Right lobe of liver (tissue), 6 donors: ENCODE measurements at regions of chr1 and their contacts with region 1.

Region 1: DNA sequence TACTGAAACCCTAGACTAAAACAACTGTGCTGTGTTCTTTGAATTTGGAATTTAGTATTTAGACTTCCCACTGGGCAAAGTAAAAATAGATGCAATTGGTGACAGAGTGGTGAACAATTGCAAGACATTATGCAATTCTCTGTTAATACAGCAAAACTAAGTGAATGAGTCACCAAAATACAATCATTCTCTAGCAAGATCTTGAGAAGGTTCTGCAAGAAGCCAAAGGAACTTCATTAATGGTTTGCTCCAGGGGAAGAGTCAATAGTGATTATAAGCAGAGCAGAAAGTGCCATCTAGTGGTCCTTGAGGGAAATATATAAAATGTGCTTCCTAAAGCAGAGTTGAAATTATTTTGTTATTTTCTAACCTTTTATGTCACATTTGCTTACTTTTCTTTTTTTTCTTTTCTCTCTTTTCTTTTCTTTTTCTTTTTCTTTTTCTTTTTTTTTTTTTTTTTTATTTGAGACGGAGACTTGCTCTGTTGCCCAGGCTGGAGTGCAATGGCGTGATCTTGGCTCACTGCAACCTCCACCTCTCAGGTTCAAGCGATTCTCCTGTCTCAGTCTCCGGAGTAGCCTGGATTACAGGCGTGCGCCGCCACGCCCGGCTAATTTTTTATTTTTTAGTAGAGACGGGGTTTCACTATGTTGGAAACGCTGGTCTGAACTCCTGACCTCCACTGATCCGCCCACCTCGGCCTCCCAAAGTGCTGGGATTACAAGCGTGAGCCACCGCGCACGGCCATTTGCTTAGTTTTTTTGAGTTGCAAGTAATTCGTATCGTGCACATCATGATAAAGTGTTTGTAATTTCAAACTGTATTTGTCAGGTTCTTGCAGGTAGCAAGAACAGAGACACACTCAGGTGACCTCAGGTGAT is 99.2 kb downstream of the CTH start:
- DNase-seq: no peak
- ATAC-seq: peak; percentile 77 to 90 (median 82)
- H3K4me3 ChIP-seq: no peak overlapping the region
- H3K27ac ChIP-seq: no peak overlapping the region
- H3K4me1 ChIP-seq: no peaks in the 10 kb centered on the region
- H3K27me3 ChIP-seq: no peaks in the 10 kb centered on the region
- CTCF ChIP-seq: peak; percentile 66 to 74 (median 68)
- POLR2A ChIP-seq: no peak

Region 2: GRCh38 chr1:70134148-70134547 is 376.1 kb before region 1 on chr1:
- intact Hi-C with region 1: loop called in 1 of 2 experiments (anchors 10 kb)
- DNase-seq: no peak
- ATAC-seq: no peak
- H3K4me3 ChIP-seq: no peak overlapping the region
- H3K27ac ChIP-seq: no peak overlapping the region
- H3K4me1 ChIP-seq: peaks cover 0 to 9% (median 0%) of the 10 kb centered on the region in 4 donors
- H3K27me3 ChIP-seq: no peaks in the 10 kb centered on the region
- CTCF ChIP-seq: no peak
- POLR2A ChIP-seq: no peak

Region 3: GRCh38 chr1:70779571-70779970 is 269.3 kb after region 1 on chr1:
- intact Hi-C with region 1: no loop called
- DNase-seq: no peak
- ATAC-seq: no peak
- H3K4me3 ChIP-seq: no peak overlapping the region
- H3K27ac ChIP-seq: no peak overlapping the region
- H3K4me1 ChIP-seq: no peaks in the 10 kb centered on the region
- H3K27me3 ChIP-seq: no peaks in the 10 kb centered on the region
- CTCF ChIP-seq: no peak
- POLR2A ChIP-seq: no peak

Region 4: GRCh38 chr1:70790237-70790923 is 280.1 kb after region 1 on chr1:
- intact Hi-C with region 1: no loop called
- DNase-seq: no peak
- ATAC-seq: no peak
- H3K4me3 ChIP-seq: no peak overlapping the region
- H3K27ac ChIP-seq: no peak overlapping the region
- H3K4me1 ChIP-seq: no peaks in the 10 kb centered on the region
- H3K27me3 ChIP-seq: no peaks in the 10 kb centered on the region
- CTCF ChIP-seq: no peak
- POLR2A ChIP-seq: no peak